ENCODE measurements at regions of chr14 and their contacts with region 1.

Region 1: GRCh38 chr14:99266181-99267178 is 5.5 kb downstream of the BCL11B start:
- DNase-seq: peak; percentile 58
- H3K4me3 ChIP-seq: no peak overlapping the region
- H3K27ac ChIP-seq: no peak overlapping the region
- H3K4me1 ChIP-seq: no peaks in the 10 kb centered on the region
- CTCF ChIP-seq: peak; percentile 100

Region 2: DNA sequence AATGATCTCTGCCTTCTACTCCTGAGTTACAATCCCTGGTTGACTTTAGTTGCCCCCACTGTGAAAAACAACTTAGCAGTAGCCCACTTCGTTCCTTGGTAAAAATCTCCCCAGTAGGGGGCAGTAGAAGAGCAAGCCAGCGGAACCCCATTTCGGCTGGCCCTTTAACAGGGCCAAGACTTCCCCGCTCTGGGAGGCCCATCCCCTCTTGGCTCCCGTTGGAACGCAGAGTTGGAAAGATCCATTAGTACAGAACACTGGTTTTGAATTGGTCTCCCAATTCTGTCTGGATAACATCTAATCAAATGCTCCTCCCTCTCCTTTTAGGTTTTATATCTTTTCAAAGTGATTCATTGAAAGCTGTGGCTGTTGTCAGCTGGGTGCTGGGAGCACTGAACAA is 1127.8 kb before region 1 on chr14:
- CTCF ChIA-PET with region 1: no interaction called
- POLR2A ChIA-PET with region 1: no interaction called
- intact Hi-C with region 1: loop called (anchors 1 kb)
- DNase-seq: peak; percentile 25
- H3K4me3 ChIP-seq: no peak overlapping the region
- H3K27ac ChIP-seq: no peak overlapping the region
- H3K4me1 ChIP-seq: no peaks in the 10 kb centered on the region
- CTCF ChIP-seq: peak; percentile 83